Right ventricle myocardium inferior (tissue), 1 donor: ENCODE measurements at regions of chr17 and their contacts with region 1.

Region 1: GRCh38 chr17:48024937-48025906 is 12.4 kb downstream of the COPZ2 start:
- DNase-seq: peak; percentile 100
- ATAC-seq: peak; percentile 93

Region 2: GRCh38 chr17:47840740-47841603 is 184.2 kb before region 1 on chr17 and contains the start of gene SCRN2:
- intact Hi-C with region 1: loop called (anchors 2 kb)
- DNase-seq: peak; percentile 96
- ATAC-seq: peak; percentile 95
- total RNA-seq, gene SCRN2: 27.0 TPM

Region 3: DNA sequence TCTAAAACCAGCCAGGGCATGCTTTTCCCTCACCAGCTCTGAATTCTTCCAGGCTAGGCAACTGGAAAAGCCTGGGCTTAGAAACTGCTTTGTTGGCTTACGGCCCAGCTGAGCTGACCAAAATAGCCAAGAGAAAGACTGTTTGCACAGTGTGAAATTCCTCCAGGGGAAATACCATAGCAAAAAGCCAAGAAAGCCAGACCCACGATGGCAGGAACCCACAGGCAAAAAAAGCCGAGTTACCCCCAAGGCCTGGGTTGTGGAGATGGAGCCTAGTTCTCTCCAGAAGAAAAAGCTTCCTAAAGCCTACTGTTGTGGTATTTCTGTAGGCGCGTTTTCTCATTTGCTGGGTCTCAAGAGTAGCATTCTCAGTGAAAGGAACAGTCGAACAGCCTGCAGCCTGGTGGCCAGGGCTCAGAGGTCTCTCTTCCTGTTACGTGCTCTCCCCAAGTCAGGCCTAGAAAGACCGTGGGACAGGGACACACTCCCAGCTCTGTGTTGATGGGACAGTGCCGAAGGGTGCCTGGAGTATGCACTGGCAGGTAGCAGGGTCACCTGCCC is 119.9 kb before region 1 on chr17:
- intact Hi-C with region 1: no loop called
- DNase-seq: no peak
- ATAC-seq: peak; percentile 86

Region 4: GRCh38 chr17:48051706-48052486 is 26.7 kb after region 1 on chr17:
- intact Hi-C with region 1: loop called (anchors 2 kb)
- DNase-seq: peak; percentile 79
- ATAC-seq: peak; percentile 35

Region 5: GRCh38 chr17:48074315-48075081 is 49.3 kb after region 1 on chr17:
- intact Hi-C with region 1: loop called (anchors 1 kb)
- DNase-seq: no peak
- ATAC-seq: peak; percentile 73

Region 6: GRCh38 chr17:48131216-48131824 is 106.1 kb after region 1 on chr17:
- intact Hi-C with region 1: loop called (anchors 1 kb)
- DNase-seq: no peak
- ATAC-seq: peak; percentile 89

Region 7: DNA sequence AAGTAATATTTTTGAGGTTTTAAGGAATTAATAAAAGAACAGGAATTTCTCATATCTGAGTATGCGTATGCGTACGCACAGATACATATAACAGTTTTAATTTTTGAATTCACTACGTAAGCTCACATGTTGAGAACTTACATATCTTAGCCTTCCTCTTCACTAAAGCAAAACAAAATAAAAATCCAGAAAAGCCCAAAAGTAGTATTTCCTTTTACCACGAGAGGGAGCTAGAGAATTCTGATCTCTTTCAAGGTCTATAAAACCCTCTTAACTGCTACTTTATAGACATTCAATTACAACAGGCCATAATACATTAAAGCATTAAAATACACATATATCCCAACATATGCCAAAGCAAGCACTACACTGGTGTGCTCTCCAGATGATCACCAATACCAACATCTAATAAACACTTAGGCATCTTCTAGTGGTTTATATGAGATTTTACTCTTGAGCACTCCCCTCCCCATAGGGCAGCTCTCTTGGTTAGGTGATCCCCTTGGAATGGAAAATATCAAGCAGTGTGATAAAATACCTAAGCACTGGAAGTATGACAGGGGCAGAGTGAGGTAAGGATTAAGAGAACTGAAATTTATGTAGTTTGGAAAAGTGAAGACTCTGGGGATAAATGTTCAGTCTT is 310.8 kb after region 1 on chr17:
- intact Hi-C with region 1: loop called (anchors 10 kb)
- DNase-seq: no peak
- ATAC-seq: no peak

Region 8: GRCh38 chr17:48618256-48618897 is 593.2 kb after region 1 on chr17:
- intact Hi-C with region 1: loop called (anchors 10 kb)
- DNase-seq: peak; percentile 92
- ATAC-seq: peak; percentile 79